ENCODE measurements at regions of chr12 and their contacts with region 1.

Region 1: DNA sequence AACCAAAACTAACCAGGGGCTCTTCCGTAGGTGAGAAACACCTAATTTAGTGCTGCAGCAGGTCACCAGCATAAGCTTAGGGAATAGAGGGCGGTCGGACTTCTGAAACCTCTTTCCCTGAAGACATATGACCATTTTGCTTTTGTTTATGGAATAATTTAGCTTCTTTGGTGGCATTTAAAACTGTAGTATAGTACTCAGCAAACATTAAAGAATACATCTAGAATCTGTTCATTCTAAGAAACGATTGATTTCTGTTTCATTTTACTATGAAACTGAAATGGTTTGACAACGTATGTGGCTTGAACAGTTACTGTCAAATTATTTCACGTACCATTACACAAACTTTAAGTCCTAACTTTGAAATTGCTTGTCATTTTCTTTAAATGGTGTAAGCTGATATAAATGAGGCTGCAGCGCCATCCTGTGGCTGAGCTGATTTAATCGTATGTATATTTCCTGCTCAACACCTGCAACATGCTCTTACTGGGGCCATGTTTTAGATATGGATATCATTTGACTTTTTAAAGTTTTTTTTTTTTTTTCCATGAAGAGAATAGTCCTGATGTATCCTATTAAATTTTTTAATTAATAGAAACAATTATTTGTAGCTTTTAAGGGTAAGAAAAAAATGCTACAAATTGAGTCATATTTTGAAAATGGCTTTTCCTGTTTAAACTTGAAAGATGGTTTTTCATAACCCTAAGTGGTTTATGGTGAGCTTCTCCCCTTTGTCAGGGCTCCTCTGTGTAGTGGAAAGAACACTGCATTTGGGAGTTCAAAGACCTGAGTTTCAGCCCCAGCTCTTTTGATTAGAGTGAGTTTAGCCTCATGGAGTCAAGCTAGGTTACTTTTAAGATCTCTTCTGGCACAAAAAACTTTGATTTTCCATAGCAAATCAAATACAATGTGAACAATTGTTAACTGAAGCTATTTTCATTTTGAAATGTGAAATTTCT is 27.4 kb downstream of the CFAP54 start:
- DNase-seq: peak; percentile 59 to 84 (median 78)
- ATAC-seq: peak; percentile 95
- H3K4me3 ChIP-seq: no peak overlapping the region
- H3K4me3 Mint-ChIP-seq: peak overlapping the region in 5 of 10 donors; percentile 4 to 46 (median 33)
- H3K27ac ChIP-seq: no peak overlapping the region
- H3K27ac Mint-ChIP-seq: peak overlapping the region in 8 of 9 donors; percentile 46 to 86 (median 78)
- H3K4me1 ChIP-seq: peaks cover 4 to 5% of the 10 kb centered on the region in 2 donors
- H3K4me1 Mint-ChIP-seq: peaks cover 4 to 22% (median 15%) of the 10 kb centered on the region in 7 donors
- H3K27me3 ChIP-seq: no peaks in the 10 kb centered on the region
- H3K27me3 Mint-ChIP-seq: no peaks in the 10 kb centered on the region

Region 2: GRCh38 chr12:95918194-95918993 is 598.4 kb before region 1 on chr12:
- CTCF ChIA-PET with region 1: interaction called, 4 read pairs
- POLR2A ChIA-PET with region 1: interaction called, 3 read pairs
- intact Hi-C with region 1: loop called (anchors 1 kb)
- DNase-seq: peak in 7 of 9 donors; percentile 28 to 67 (median 59)
- ATAC-seq: peak; percentile 97
- H3K4me3 ChIP-seq: no peak overlapping the region
- H3K4me3 Mint-ChIP-seq: no peak overlapping the region
- H3K27ac ChIP-seq: no peak overlapping the region
- H3K27ac Mint-ChIP-seq: no peak overlapping the region
- H3K4me1 ChIP-seq: no peaks in the 10 kb centered on the region
- H3K4me1 Mint-ChIP-seq: peaks cover 0 to 2% (median 0%) of the 10 kb centered on the region in 7 donors
- H3K27me3 ChIP-seq: no peaks in the 10 kb centered on the region
- H3K27me3 Mint-ChIP-seq: peaks cover 0 to 15% (median 5%) of the 10 kb centered on the region in 5 donors

Region 3: DNA sequence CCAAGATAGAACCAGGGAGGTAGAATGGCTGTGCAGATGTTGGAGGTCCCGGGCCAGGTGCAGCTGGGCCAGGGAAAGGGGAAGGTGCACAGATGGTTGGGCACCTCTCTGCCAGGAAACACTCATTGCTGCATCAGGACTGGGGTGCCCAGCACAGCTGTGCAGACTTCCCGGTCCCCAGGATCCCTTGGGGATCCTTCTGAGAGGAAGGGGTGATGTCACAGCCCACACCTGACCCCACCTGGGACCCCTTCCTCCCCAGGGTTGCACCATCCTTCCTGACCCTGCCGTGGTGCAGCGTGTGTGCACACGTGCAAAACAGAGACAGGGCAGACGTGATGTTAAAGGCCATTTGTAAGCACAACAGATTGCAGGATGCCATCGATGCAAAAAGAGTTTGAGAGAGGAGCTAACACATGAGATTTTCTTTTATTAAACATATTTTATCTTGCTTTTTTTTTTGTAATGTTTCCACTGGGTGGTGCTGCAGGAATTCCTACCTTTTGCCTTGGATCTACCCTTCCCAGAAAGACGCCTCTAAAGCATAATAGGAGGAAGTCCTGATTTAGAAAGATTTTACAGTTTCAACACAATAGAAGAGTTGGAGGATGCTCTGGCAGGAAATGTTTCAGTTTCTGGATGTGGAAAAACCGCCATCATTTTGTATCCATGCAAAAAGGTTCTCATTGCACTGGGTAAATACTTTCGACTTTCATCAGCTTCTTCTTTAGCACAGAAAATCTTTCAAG is 307.8 kb before region 1 on chr12:
- CTCF ChIA-PET with region 1: interaction called, 65 read pairs
- POLR2A ChIA-PET with region 1: interaction called, 4 read pairs
- intact Hi-C with region 1: no loop called
- DNase-seq: no peak
- ATAC-seq: peak; percentile 15
- H3K4me3 ChIP-seq: no peak overlapping the region
- H3K4me3 Mint-ChIP-seq: peak overlapping the region; percentile 69 to 97 (median 85)
- H3K27ac ChIP-seq: peak overlapping the region; percentile 62
- H3K27ac Mint-ChIP-seq: peak overlapping the region; percentile 50 to 99 (median 96)
- H3K4me1 ChIP-seq: peaks cover 64 to 93% of the 10 kb centered on the region in 2 donors
- H3K4me1 Mint-ChIP-seq: peaks cover 70 to 100% (median 98%) of the 10 kb centered on the region in 7 donors
- H3K27me3 ChIP-seq: no peaks in the 10 kb centered on the region
- H3K27me3 Mint-ChIP-seq: no peaks in the 10 kb centered on the region

Region 4: DNA sequence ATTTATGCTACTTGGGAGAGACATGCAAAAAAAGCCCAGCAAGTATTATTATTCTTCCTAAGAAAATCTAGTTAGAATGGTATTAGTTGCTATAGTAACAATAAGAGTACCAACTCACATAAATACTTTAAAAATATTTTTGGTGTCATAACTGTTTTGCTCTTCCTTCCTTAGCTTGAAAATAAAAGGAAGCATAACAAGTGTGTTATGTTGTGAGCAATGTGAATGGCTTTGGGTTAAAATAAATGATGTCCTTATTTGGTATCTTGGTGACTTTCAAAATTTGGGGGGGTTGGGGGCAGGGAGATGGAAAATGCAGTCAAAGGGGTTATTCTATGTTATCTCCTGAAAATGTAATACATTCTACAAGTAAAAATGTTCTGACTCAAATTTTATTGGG is 231.6 kb before region 1 on chr12:
- CTCF ChIA-PET with region 1: interaction called, 3 read pairs
- POLR2A ChIA-PET with region 1: no interaction called
- intact Hi-C with region 1: loop called in 1 of 2 experiments (anchors 5 kb)
- DNase-seq: no peak
- ATAC-seq: no peak
- H3K4me3 ChIP-seq: no peak overlapping the region
- H3K4me3 Mint-ChIP-seq: no peak overlapping the region
- H3K27ac ChIP-seq: no peak overlapping the region
- H3K27ac Mint-ChIP-seq: peak overlapping the region in 6 of 9 donors; percentile 0 to 60 (median 46)
- H3K4me1 ChIP-seq: no peaks in the 10 kb centered on the region
- H3K4me1 Mint-ChIP-seq: peaks cover 4 to 30% (median 22%) of the 10 kb centered on the region in 7 donors
- H3K27me3 ChIP-seq: no peaks in the 10 kb centered on the region
- H3K27me3 Mint-ChIP-seq: no peaks in the 10 kb centered on the region

Region 5: DNA sequence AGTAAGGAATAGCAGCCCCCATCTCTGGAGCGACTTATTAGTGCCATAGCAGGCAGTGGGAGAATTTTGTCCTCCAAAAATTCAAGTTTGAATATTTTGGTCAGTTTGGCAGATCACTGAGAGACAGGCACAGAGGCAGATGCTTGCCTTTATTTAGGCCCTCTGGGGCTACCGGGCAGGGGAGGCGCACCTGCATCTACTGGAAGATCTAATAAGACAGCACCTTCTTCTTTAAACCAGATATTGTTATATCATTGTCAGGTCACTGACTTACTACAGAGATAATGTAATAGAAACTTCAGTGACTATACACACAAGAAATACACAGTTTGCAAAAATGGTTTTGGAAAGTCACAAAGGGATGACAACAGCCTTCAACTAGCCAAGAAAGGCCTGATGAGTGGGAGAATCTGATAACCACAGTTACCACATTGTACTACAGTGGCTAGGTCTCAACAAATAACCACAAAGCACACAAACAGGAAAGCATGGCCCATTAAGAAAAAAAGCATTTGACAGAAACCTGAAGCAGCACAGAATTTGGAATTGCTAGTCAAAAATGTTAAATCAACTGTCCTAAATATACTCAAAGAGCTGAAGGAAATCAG is 173.3 kb before region 1 on chr12:
- CTCF ChIA-PET with region 1: no interaction called
- POLR2A ChIA-PET with region 1: no interaction called
- intact Hi-C with region 1: loop called in 1 of 2 experiments (anchors 1 kb)
- DNase-seq: no peak
- ATAC-seq: peak; percentile 65
- H3K4me3 ChIP-seq: no peak overlapping the region
- H3K4me3 Mint-ChIP-seq: peak overlapping the region in 7 of 10 donors; percentile 22 to 64 (median 61)
- H3K27ac ChIP-seq: no peak overlapping the region
- H3K27ac Mint-ChIP-seq: peak overlapping the region in 5 of 9 donors; percentile 22 to 71 (median 48)
- H3K4me1 ChIP-seq: peaks cover 10 to 15% of the 10 kb centered on the region in 2 donors
- H3K4me1 Mint-ChIP-seq: peaks cover 37 to 70% (median 61%) of the 10 kb centered on the region in 7 donors
- H3K27me3 ChIP-seq: no peaks in the 10 kb centered on the region
- H3K27me3 Mint-ChIP-seq: no peaks in the 10 kb centered on the region

Region 6: GRCh38 chr12:96445691-96446583 is 70.8 kb before region 1 on chr12:
- CTCF ChIA-PET with region 1: interaction called, 3 read pairs
- POLR2A ChIA-PET with region 1: no interaction called
- intact Hi-C with region 1: loop called in 1 of 2 experiments (anchors 2 kb)
- DNase-seq: peak in 8 of 9 donors; percentile 50 to 83 (median 78)
- ATAC-seq: peak; percentile 97
- H3K4me3 ChIP-seq: peak overlapping the region; percentile 10
- H3K4me3 Mint-ChIP-seq: peak overlapping the region; percentile 6 to 76 (median 63)
- H3K27ac ChIP-seq: peak overlapping the region; percentile 80
- H3K27ac Mint-ChIP-seq: peak overlapping the region; percentile 83 to 97 (median 92)
- H3K4me1 ChIP-seq: peaks cover 23 to 26% of the 10 kb centered on the region in 2 donors
- H3K4me1 Mint-ChIP-seq: peaks cover 17 to 55% (median 46%) of the 10 kb centered on the region in 7 donors
- H3K27me3 ChIP-seq: no peaks in the 10 kb centered on the region
- H3K27me3 Mint-ChIP-seq: no peaks in the 10 kb centered on the region

Region 7: GRCh38 chr12:96501139-96501761 is 15.5 kb before region 1 on chr12:
- CTCF ChIA-PET with region 1: interaction called, 21 read pairs
- POLR2A ChIA-PET with region 1: interaction called, 4 read pairs
- intact Hi-C with region 1: loop called in 1 of 2 experiments (anchors 2 kb)
- DNase-seq: peak in 1 of 9 donors; percentile 29
- ATAC-seq: peak; percentile 80
- H3K4me3 ChIP-seq: no peak overlapping the region
- H3K4me3 Mint-ChIP-seq: peak overlapping the region in 9 of 10 donors; percentile 18 to 66 (median 48)
- H3K27ac ChIP-seq: no peak overlapping the region
- H3K27ac Mint-ChIP-seq: peak overlapping the region; percentile 28 to 89 (median 63)
- H3K4me1 ChIP-seq: peaks cover 22 to 35% of the 10 kb centered on the region in 2 donors
- H3K4me1 Mint-ChIP-seq: peaks cover 29 to 60% (median 42%) of the 10 kb centered on the region in 7 donors
- H3K27me3 ChIP-seq: no peaks in the 10 kb centered on the region
- H3K27me3 Mint-ChIP-seq: no peaks in the 10 kb centered on the region

Region 8: DNA sequence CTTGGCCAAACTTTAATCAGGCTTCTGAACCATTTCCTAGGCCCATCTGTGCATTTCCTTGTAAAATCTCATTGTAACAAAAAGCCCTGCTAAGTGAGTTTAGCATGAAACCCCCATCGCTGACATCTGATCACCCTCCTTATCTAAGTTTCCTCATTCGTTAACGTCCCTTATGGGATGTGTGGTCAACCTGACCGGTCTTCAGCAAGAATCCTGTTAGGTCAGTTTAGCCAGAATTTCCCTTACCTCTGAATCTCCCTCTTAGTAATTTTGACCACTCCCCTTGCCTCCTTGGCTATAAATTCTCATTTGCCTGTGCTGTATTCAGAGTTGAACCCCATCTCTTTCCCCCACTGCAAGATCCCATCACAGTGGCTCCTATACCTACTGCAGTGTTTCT is 1185.1 kb after region 1 on chr12:
- CTCF ChIA-PET with region 1: no interaction called
- POLR2A ChIA-PET with region 1: no interaction called
- intact Hi-C with region 1: no loop called
- DNase-seq: no peak
- ATAC-seq: no peak
- H3K4me3 ChIP-seq: no peak overlapping the region
- H3K4me3 Mint-ChIP-seq: no peak overlapping the region
- H3K27ac ChIP-seq: no peak overlapping the region
- H3K27ac Mint-ChIP-seq: no peak overlapping the region
- H3K4me1 ChIP-seq: no peaks in the 10 kb centered on the region
- H3K4me1 Mint-ChIP-seq: no peaks in the 10 kb centered on the region
- H3K27me3 ChIP-seq: no peaks in the 10 kb centered on the region
- H3K27me3 Mint-ChIP-seq: peaks cover 0 to 8% (median 0%) of the 10 kb centered on the region in 5 donors

Measured in naive thymus-derived CD4-positive, alpha-beta T cell (primary cell).